Mammary epithelial cell (primary cell): ENCODE measurements at regions of chr12 and their contacts with region 1.

Region 1: DNA sequence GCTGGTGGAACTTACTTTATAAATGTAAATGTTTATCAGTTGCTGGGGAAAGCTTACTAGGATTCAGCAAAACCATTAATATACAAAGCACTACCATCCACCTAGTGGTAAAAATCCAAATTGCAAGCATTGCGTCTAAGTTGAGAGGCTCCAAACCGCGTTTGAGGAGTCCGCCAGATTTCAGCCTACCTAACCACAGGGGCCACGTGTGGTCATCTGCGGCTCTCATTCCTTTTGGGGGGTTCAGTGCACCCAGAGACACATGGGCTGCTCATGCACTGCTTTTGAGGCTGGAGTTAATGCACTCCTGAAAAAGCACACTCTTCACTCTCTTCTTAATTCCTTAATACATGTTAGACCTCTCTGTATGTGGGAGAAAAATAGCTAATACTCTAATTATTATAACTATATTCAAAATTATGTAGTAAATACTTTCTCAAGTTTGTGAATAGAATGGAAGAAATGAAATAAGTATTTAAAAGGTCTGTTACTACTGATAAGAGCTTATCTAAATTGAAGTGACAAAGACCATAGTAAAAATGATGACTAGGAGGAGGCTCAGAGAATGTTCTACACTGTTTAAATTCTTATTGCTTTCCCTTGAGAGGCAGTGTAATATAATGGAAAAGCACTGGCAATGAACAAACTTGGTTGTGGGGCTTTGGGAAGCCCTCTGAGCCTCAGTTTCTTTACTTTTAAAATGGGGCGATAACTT is 41.4 kb upstream of the MANSC4 start:
- DNase-seq: peak; percentile 86
- H3K4me3 ChIP-seq: peak overlapping the region in 1 of 3 experiments; percentile 14
- H3K27ac ChIP-seq: peak overlapping the region; percentile 100
- H3K4me1 ChIP-seq: peaks cover 26% of the 10 kb centered on the region
- H3K27me3 ChIP-seq: no peaks in the 10 kb centered on the region
- CTCF ChIP-seq: peak; percentile 81 to 92

Region 2: GRCh38 chr12:27779920-27780611 is 41.4 kb before region 1 on chr12 and contains the starts of genes KLHL42 and MANSC4:
- CTCF ChIA-PET with region 1: no interaction called
- dilution Hi-C with region 1: no loop called
- in situ Hi-C with region 1: no loop called
- intact Hi-C with region 1: loop called (anchors 2 kb)
- DNase-seq: peak; percentile 72
- H3K4me3 ChIP-seq: peak within 1 kb of the TSS; percentile 40 to 95 (median 71)
- H3K27ac ChIP-seq: peak within 1 kb of the TSS; percentile 69
- H3K4me1 ChIP-seq: peaks cover 21% of the 10 kb centered on the region
- H3K27me3 ChIP-seq: no peaks in the 10 kb centered on the region
- CTCF ChIP-seq: peak in 1 of 2 donors; percentile 7
- total RNA-seq, gene KLHL42: 35.0 to 40.3 TPM
- total RNA-seq, gene MANSC4: not detected

Region 3: GRCh38 chr12:27852742-27853141 is 31.3 kb after region 1 on chr12:
- CTCF ChIA-PET with region 1: no interaction called
- dilution Hi-C with region 1: no loop called
- in situ Hi-C with region 1: no loop called
- intact Hi-C with region 1: no loop called
- DNase-seq: no peak
- H3K4me3 ChIP-seq: no peak overlapping the region
- H3K27ac ChIP-seq: no peak overlapping the region
- H3K4me1 ChIP-seq: no peaks in the 10 kb centered on the region
- H3K27me3 ChIP-seq: no peaks in the 10 kb centered on the region
- CTCF ChIP-seq: no peak

Region 4: DNA sequence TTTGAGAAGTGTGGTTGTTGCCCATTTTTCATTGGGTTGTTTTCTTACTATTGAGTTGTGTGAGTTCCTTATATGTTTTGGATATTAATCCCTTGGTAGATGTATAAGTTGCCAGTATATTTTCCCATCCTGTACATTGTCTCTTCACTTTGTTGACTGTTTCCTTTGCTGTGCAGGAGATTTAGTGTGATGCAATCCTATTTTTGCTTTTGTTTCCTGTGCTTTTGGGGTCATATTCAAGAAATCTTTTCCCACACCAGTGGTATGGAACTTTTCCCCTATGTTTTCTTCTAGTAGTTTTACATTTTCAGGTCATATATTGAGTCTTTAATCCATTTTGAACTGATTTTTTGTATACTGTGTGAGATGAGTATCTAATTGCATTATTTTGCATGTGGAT is 58.3 kb after region 1 on chr12:
- CTCF ChIA-PET with region 1: no interaction called
- dilution Hi-C with region 1: no loop called
- in situ Hi-C with region 1: no loop called
- intact Hi-C with region 1: no loop called
- DNase-seq: no peak
- H3K4me3 ChIP-seq: no peak overlapping the region
- H3K27ac ChIP-seq: no peak overlapping the region
- H3K4me1 ChIP-seq: no peaks in the 10 kb centered on the region
- H3K27me3 ChIP-seq: no peaks in the 10 kb centered on the region
- CTCF ChIP-seq: no peak

Region 5: DNA sequence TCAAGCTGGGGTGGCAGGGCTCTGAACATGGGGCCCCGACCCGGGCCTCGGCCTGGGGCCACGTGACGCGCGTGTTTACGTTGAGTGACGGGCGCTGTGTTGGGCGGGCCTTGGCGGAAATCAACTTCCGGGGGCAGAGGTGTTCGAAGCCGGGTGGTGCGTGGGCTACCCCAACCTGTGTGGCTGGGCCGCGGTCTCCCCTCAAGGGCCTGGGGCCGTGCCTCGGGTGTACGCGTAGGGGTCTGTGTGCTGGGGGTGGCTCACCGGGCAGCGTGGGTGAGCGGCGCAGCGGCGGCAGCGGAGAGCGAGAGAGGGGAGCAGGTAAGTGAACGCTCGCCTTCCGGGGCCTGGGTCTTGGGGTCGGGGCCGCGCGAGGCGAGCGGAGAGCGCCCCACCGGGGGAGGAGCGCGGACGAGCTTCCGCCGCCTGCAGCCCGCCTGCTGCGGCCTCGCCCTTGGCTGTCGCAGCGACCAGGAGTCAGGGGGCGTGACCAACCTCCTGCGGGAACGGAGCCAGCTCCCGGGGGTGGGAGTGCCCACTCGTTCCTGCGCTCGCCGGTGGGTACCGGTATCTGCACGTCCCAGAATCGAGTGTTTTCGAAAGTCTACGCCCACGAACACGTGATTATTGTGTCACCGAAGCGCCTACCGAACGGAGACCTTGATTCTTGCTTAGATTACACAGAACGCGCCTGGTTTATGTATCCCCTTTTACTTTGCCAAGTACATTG is 369.1 kb after region 1 on chr12 and contains the start of gene CCDC91:
- CTCF ChIA-PET with region 1: no interaction called
- dilution Hi-C with region 1: no loop called
- in situ Hi-C with region 1: no loop called
- intact Hi-C with region 1: loop called (anchors 10 kb)
- DNase-seq: peak; percentile 86
- H3K4me3 ChIP-seq: peak within 1 kb of the TSS; percentile 72 to 93 (median 88)
- H3K27ac ChIP-seq: peak within 1 kb of the TSS; percentile 96
- H3K4me1 ChIP-seq: peaks cover 16% of the 10 kb centered on the region
- H3K27me3 ChIP-seq: no peaks in the 10 kb centered on the region
- CTCF ChIP-seq: no peak
- total RNA-seq, gene CCDC91: 20.8 to 22.7 TPM